MCF 10A (cell line): ENCODE measurements at regions of chr15 and their contacts with region 1.

Region 1: GRCh38 chr15:47987908-47988532 is 132.8 kb upstream of the SLC24A5 start:
- DNase-seq: peak; percentile 64
- H3K4me3 Mint-ChIP-seq: no peak overlapping the region
- H3K27ac Mint-ChIP-seq: no peak overlapping the region
- H3K4me1 Mint-ChIP-seq: no peaks in the 10 kb centered on the region
- H3K27me3 Mint-ChIP-seq: no peaks in the 10 kb centered on the region
- CTCF ChIP-seq: peak; percentile 69

Region 2: GRCh38 chr15:47384341-47384740 is 603.7 kb before region 1 on chr15:
- CTCF ChIA-PET with region 1: no interaction called
- POLR2A ChIA-PET with region 1: no interaction called
- intact Hi-C with region 1: loop called (anchors 10 kb)
- DNase-seq: peak; percentile 78
- H3K4me3 Mint-ChIP-seq: no peak overlapping the region
- H3K27ac Mint-ChIP-seq: peak overlapping the region; percentile 54
- H3K4me1 Mint-ChIP-seq: peaks cover 27% of the 10 kb centered on the region
- H3K27me3 Mint-ChIP-seq: no peaks in the 10 kb centered on the region
- CTCF ChIP-seq: no peak

Region 3: GRCh38 chr15:47500823-47501222 is 487.2 kb before region 1 on chr15:
- CTCF ChIA-PET with region 1: interaction called, 13 read pairs
- POLR2A ChIA-PET with region 1: no interaction called
- intact Hi-C with region 1: loop called (anchors 1 kb)
- DNase-seq: no peak
- H3K4me3 Mint-ChIP-seq: no peak overlapping the region
- H3K27ac Mint-ChIP-seq: no peak overlapping the region
- H3K4me1 Mint-ChIP-seq: no peaks in the 10 kb centered on the region
- H3K27me3 Mint-ChIP-seq: no peaks in the 10 kb centered on the region
- CTCF ChIP-seq: peak; percentile 31

Region 4: GRCh38 chr15:47717036-47717611 is 270.9 kb before region 1 on chr15 and contains the start of gene SEMA6D:
- CTCF ChIA-PET with region 1: interaction called, 35 read pairs
- POLR2A ChIA-PET with region 1: interaction called, 5 read pairs
- intact Hi-C with region 1: no loop called
- DNase-seq: peak; percentile 73
- H3K4me3 Mint-ChIP-seq: peak within 1 kb of the TSS; percentile 81
- H3K27ac Mint-ChIP-seq: peak within 1 kb of the TSS; percentile 25
- H3K4me1 Mint-ChIP-seq: peaks cover 5% of the 10 kb centered on the region
- H3K27me3 Mint-ChIP-seq: no peaks in the 10 kb centered on the region
- CTCF ChIP-seq: peak; percentile 40
- total RNA-seq, gene SEMA6D: 0.65 and 1.1 TPM in 2 replicates

Region 5: GRCh38 chr15:48005077-48005476 is 17.1 kb after region 1 on chr15:
- CTCF ChIA-PET with region 1: no interaction called
- POLR2A ChIA-PET with region 1: no interaction called
- intact Hi-C with region 1: no loop called
- DNase-seq: no peak
- H3K4me3 Mint-ChIP-seq: no peak overlapping the region
- H3K27ac Mint-ChIP-seq: no peak overlapping the region
- H3K4me1 Mint-ChIP-seq: peaks cover 11% of the 10 kb centered on the region
- H3K27me3 Mint-ChIP-seq: no peaks in the 10 kb centered on the region
- CTCF ChIP-seq: no peak

Region 6: GRCh38 chr15:48084759-48085590 is 97.0 kb after region 1 on chr15:
- CTCF ChIA-PET with region 1: interaction called, 28 read pairs
- POLR2A ChIA-PET with region 1: no interaction called
- intact Hi-C with region 1: loop called (anchors 5 kb)
- DNase-seq: peak; percentile 49
- H3K4me3 Mint-ChIP-seq: no peak overlapping the region
- H3K27ac Mint-ChIP-seq: no peak overlapping the region
- H3K4me1 Mint-ChIP-seq: peaks cover 12% of the 10 kb centered on the region
- H3K27me3 Mint-ChIP-seq: no peaks in the 10 kb centered on the region
- CTCF ChIP-seq: peak; percentile 47

Region 7: GRCh38 chr15:48285329-48286214 is 297.6 kb after region 1 on chr15:
- CTCF ChIA-PET with region 1: interaction called, 20 read pairs
- POLR2A ChIA-PET with region 1: no interaction called
- intact Hi-C with region 1: loop called (anchors 5 kb)
- DNase-seq: peak; percentile 77
- H3K4me3 Mint-ChIP-seq: peak overlapping the region; percentile 58
- H3K27ac Mint-ChIP-seq: peak overlapping the region; percentile 31
- H3K4me1 Mint-ChIP-seq: no peaks in the 10 kb centered on the region
- H3K27me3 Mint-ChIP-seq: no peaks in the 10 kb centered on the region
- CTCF ChIP-seq: peak; percentile 53